ENCODE measurements at regions of chr9 and their contacts with region 1.

Region 1: GRCh38 chr9:20622330-20623020 is at the start of gene MLLT3:
- DNase-seq: peak; percentile 95 to 98 (median 97)
- ATAC-seq: peak; percentile 74
- H3K4me3 ChIP-seq: peak within 1 kb of the TSS; percentile 97 to 98
- H3K4me3 Mint-ChIP-seq: peak within 1 kb of the TSS; percentile 98
- H3K27ac ChIP-seq: peak within 1 kb of the TSS; percentile 75 to 88
- H3K27ac Mint-ChIP-seq: peak within 1 kb of the TSS; percentile 99
- H3K4me1 ChIP-seq: peaks cover 41% of the 10 kb centered on the region
- H3K4me1 Mint-ChIP-seq: peaks cover 46% of the 10 kb centered on the region
- H3K27me3 ChIP-seq: no peaks in the 10 kb centered on the region
- H3K27me3 Mint-ChIP-seq: no peaks in the 10 kb centered on the region
- CTCF ChIP-seq: no peak
- total RNA-seq, gene MLLT3: 40.3 to 44.5 TPM

Region 2: GRCh38 chr9:20356403-20357035 is 266.0 kb before region 1 on chr9:
- CTCF ChIA-PET with region 1: interaction called, 3 read pairs
- POLR2A ChIA-PET with region 1: no interaction called
- intact Hi-C with region 1: loop called (anchors 2 to 10 kb)
- DNase-seq: peak; percentile 6 to 69 (median 42)
- ATAC-seq: peak; percentile 75
- H3K4me3 ChIP-seq: no peak overlapping the region
- H3K4me3 Mint-ChIP-seq: no peak overlapping the region
- H3K27ac ChIP-seq: no peak overlapping the region
- H3K27ac Mint-ChIP-seq: no peak overlapping the region
- H3K4me1 ChIP-seq: peaks cover 7% of the 10 kb centered on the region
- H3K4me1 Mint-ChIP-seq: peaks cover 38% of the 10 kb centered on the region
- H3K27me3 ChIP-seq: no peaks in the 10 kb centered on the region
- H3K27me3 Mint-ChIP-seq: no peaks in the 10 kb centered on the region
- CTCF ChIP-seq: peak; percentile 59

Region 3: GRCh38 chr9:20552874-20553575 is 69.5 kb before region 1 on chr9:
- CTCF ChIA-PET with region 1: interaction called, 4 read pairs
- POLR2A ChIA-PET with region 1: no interaction called
- intact Hi-C with region 1: loop called (anchors 2 to 5 kb)
- DNase-seq: peak in 2 of 9 experiments; percentile 7 to 29
- ATAC-seq: peak; percentile 17
- H3K4me3 ChIP-seq: no peak overlapping the region
- H3K4me3 Mint-ChIP-seq: peak overlapping the region; percentile 10
- H3K27ac ChIP-seq: no peak overlapping the region
- H3K27ac Mint-ChIP-seq: peak overlapping the region; percentile 23
- H3K4me1 ChIP-seq: peaks cover 37% of the 10 kb centered on the region
- H3K4me1 Mint-ChIP-seq: peaks cover 81% of the 10 kb centered on the region
- H3K27me3 ChIP-seq: no peaks in the 10 kb centered on the region
- H3K27me3 Mint-ChIP-seq: no peaks in the 10 kb centered on the region
- CTCF ChIP-seq: peak; percentile 27

Region 4: DNA sequence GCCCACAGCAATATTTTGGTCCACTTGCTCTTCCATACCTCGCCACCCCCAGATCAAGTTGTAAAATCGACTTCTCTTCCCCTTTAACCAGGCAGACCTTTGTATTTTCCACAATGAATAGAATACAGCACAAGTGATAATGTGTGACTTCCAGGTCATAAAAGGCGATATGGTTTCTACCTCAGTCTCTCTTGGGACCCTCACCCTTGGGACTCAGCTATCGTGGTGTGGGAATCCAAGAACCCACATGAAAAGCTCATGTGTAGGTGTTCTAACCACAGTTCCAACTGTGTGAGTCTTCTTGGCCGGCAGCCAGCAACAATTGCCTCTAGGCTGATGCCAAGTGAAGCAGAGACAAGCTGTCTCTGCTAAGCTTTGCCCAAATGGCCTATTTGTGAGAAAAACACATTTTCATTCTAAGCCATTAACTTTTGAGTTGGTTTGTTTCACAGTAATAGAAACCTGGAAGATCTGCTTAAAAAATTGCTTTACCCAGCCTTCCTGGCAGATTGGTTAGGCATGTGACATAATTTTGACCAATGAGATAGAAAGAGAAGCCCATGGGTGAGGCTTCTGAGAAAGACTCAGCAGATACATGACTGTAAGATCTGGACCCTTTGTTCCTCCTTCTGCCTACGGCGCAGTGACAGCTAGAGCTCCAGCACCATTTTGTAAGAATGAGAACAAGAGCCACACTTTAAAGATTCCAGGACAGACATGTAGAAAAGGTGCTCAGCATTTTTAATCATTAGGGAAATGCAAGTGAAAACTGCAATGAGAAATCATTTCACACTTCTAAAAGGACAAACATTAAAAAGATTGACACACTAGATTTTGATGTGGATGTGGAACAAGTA is 18.1 kb after region 1 on chr9:
- CTCF ChIA-PET with region 1: interaction called, 4 read pairs
- POLR2A ChIA-PET with region 1: interaction called, 6 read pairs
- intact Hi-C with region 1: loop called in 1 of 2 experiments (anchors 1 kb)
- DNase-seq: peak; percentile 46 to 87 (median 82)
- ATAC-seq: peak; percentile 85
- H3K4me3 ChIP-seq: peak overlapping the region in 1 of 2 experiments; percentile 10
- H3K4me3 Mint-ChIP-seq: peak overlapping the region; percentile 51
- H3K27ac ChIP-seq: no peak overlapping the region
- H3K27ac Mint-ChIP-seq: peak overlapping the region; percentile 69
- H3K4me1 ChIP-seq: peaks cover 19% of the 10 kb centered on the region
- H3K4me1 Mint-ChIP-seq: peaks cover 18% of the 10 kb centered on the region
- H3K27me3 ChIP-seq: no peaks in the 10 kb centered on the region
- H3K27me3 Mint-ChIP-seq: no peaks in the 10 kb centered on the region
- CTCF ChIP-seq: no peak

Region 5: GRCh38 chr9:21031091-21031807 is 408.8 kb after region 1 on chr9 and contains the start of gene HACD4:
- CTCF ChIA-PET with region 1: no interaction called
- POLR2A ChIA-PET with region 1: interaction called, 5 read pairs
- intact Hi-C with region 1: loop called (anchors 2 kb)
- DNase-seq: peak; percentile 40 to 83 (median 68)
- ATAC-seq: peak; percentile 82
- H3K4me3 ChIP-seq: peak within 1 kb of the TSS; percentile 75 to 94
- H3K4me3 Mint-ChIP-seq: peak within 1 kb of the TSS; percentile 84
- H3K27ac ChIP-seq: peak within 1 kb of the TSS; percentile 79 to 85
- H3K27ac Mint-ChIP-seq: peak within 1 kb of the TSS; percentile 88
- H3K4me1 ChIP-seq: peaks cover 41% of the 10 kb centered on the region
- H3K4me1 Mint-ChIP-seq: peaks cover 24% of the 10 kb centered on the region
- H3K27me3 ChIP-seq: no peaks in the 10 kb centered on the region
- H3K27me3 Mint-ChIP-seq: no peaks in the 10 kb centered on the region
- CTCF ChIP-seq: no peak
- total RNA-seq, gene HACD4: 5.9 to 6.3 TPM